Vagina (tissue), 2 donors: ENCODE measurements at regions of chr3 and their contacts with region 1.

Region 1: GRCh38 chr3:171772427-171773056 is 37.7 kb downstream of the PLD1 start:
- DNase-seq: no peak
- H3K4me3 ChIP-seq: no peak overlapping the region
- H3K27ac ChIP-seq: no peak overlapping the region
- H3K4me1 ChIP-seq: peaks cover 47% of the 10 kb centered on the region
- H3K27me3 ChIP-seq: no peaks in the 10 kb centered on the region
- CTCF ChIP-seq: peak; percentile 37 to 64 (median 53)
- POLR2A ChIP-seq: no peak

Region 2: DNA sequence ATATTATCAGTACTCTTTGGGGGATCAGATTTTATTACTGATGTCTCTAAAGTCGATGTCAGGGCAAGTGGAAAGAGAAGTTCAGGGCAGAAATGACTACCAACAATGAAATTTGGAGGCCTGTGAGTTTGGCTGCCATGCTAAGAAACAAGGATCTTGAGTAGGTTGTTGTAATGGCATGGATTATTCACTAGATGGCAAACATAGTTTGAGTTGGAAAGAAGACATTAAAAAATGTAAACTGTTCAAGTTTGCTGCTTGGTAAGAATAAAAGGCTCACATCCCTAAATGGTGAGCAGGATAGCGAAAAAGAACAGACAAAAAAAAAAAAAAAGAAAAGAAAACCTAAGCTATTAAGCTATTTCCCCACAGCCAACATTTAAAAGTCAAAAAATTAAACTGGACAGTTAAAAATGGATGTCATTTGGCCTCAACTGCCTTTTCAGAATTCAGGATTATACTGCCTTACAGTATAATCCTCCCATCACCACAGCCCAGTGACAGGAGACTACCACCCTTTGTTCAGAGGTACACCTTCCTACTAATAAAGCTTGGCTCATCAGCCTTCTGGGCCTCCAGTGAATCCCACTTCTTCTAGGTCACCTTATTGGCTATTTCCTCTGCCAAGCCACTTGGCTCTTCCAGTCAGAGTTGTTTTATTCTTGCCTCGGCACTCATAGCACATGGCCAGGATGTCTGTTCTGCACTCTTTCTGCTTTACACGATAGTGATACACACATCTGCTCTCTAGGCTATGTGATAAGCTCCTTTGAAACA is 126.0 kb before region 1 on chr3:
- intact Hi-C with region 1: loop called (anchors 10 kb)
- DNase-seq: no peak
- H3K4me3 ChIP-seq: no peak overlapping the region
- H3K27ac ChIP-seq: peak overlapping the region; percentile 60
- H3K4me1 ChIP-seq: peaks cover 6% of the 10 kb centered on the region
- H3K27me3 ChIP-seq: no peaks in the 10 kb centered on the region
- CTCF ChIP-seq: peak in 2 of 3 experiments; percentile 48 to 81
- POLR2A ChIP-seq: no peak

Region 3: GRCh38 chr3:171809821-171810628 is 37.5 kb after region 1 on chr3 and contains the start of gene PLD1:
- intact Hi-C with region 1: loop called (anchors 5 kb)
- DNase-seq: no peak
- H3K4me3 ChIP-seq: peak within 1 kb of the TSS; percentile 67 to 88
- H3K27ac ChIP-seq: peak within 1 kb of the TSS; percentile 91
- H3K4me1 ChIP-seq: peaks cover 41% of the 10 kb centered on the region
- H3K27me3 ChIP-seq: no peaks in the 10 kb centered on the region
- CTCF ChIP-seq: no peak
- POLR2A ChIP-seq: no peak
- total RNA-seq, gene PLD1: 35.6 TPM